Activated naive CD4-positive, alpha-beta T cell treated with anti-CD3 and anti-CD28 coated beads for 36 hours (primary cell): ENCODE measurements at regions of chr12 and their contacts with region 1.

Region 1: DNA sequence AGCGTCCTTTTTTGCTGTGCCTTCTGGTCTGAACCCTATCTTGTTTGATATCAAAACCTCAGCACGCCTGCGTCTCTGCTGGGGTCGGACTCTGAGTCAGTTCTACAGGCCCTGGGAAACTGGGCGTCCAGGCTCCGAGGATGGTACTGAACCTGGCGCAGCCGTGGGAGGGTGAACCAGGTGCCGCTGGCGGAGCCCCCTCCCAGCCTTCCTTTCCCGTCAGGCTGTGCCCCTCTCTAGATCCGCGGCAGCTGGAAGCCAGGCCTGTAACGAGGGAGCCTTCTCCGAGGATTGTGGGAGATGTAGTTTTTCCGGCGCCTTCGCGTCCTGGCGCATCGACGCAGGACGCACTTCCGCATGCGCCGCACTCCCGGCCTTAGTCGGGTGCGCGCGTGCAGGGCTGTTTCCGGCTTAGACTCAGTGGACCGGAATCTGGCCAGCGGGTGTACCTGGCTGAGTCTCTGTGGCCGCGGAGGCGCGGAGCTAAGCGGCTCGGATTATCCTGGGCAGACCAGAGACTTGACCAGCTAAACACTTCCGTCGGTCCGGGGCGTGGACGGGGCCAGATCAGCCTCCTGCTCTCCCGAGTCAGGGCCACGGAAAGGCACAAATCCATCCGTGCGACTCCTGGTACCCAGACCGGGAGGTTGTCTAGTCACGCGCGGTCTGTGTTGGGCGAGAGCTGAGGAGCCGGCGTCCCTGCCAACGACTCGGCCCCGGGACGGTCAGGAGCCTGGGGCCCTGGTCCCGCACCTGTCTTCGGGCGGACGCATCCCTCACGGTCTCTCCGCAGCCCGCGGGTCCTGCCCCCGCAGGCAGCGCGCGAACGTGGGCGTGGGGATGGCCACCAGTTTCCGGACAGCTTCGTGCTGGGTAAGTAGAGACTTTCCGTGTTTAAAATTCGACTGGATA is at the start of gene ZNF26:
- DNase-seq: peak; percentile 92
- H3K4me3 Mint-ChIP-seq: peak within 1 kb of the TSS; percentile 91
- H3K27ac Mint-ChIP-seq: peak within 1 kb of the TSS; percentile 90
- H3K4me1 Mint-ChIP-seq: peaks cover 24% of the 10 kb centered on the region
- H3K27me3 Mint-ChIP-seq: peaks cover 4% of the 10 kb centered on the region
- total RNA-seq, gene ZNF26: 8.4 to 12.2 TPM

Region 2: GRCh38 chr12:132956011-132956788 is 30.1 kb before region 1 on chr12 and contains the start of gene ZNF605:
- CTCF ChIA-PET with region 1: interaction called, 6 read pairs
- intact Hi-C with region 1: loop called (anchors 1 kb)
- DNase-seq: peak; percentile 92
- H3K4me3 Mint-ChIP-seq: peak within 1 kb of the TSS; percentile 89
- H3K27ac Mint-ChIP-seq: peak within 1 kb of the TSS; percentile 87
- H3K4me1 Mint-ChIP-seq: peaks cover 20% of the 10 kb centered on the region
- H3K27me3 Mint-ChIP-seq: no peaks in the 10 kb centered on the region
- total RNA-seq, gene ZNF605: 4.3 to 5.3 TPM

Region 3: GRCh38 chr12:133181238-133181959 is 195.1 kb after region 1 on chr12 and contains the start of gene ZNF268:
- CTCF ChIA-PET with region 1: no interaction called
- intact Hi-C with region 1: loop called (anchors 1 kb)
- DNase-seq: peak; percentile 96
- H3K4me3 Mint-ChIP-seq: peak within 1 kb of the TSS; percentile 94
- H3K27ac Mint-ChIP-seq: peak within 1 kb of the TSS; percentile 79
- H3K4me1 Mint-ChIP-seq: peaks cover 19% of the 10 kb centered on the region
- H3K27me3 Mint-ChIP-seq: no peaks in the 10 kb centered on the region
- total RNA-seq, gene ZNF268: 8.4 to 9.1 TPM